PC-9 (cell line): ENCODE measurements at regions of chr7 and their contacts with region 1.

Region 1: GRCh38 chr7:99210264-99210970 is 2.5 kb upstream of the KPNA7 start:
- DNase-seq: peak; percentile 52 to 99
- H3K4me3 ChIP-seq: peak overlapping the region; percentile 20; the same call in 1 of the 2 replicates
- H3K27ac ChIP-seq: peak overlapping the region; percentile 100
- H3K4me1 ChIP-seq: peaks cover 70% of the 10 kb centered on the region
- H3K27me3 ChIP-seq: no peaks in the 10 kb centered on the region
- CTCF ChIP-seq: no peak

Region 2: GRCh38 chr7:99040104-99040958 is 170.1 kb before region 1 on chr7:
- CTCF ChIA-PET with region 1: no interaction called
- POLR2A ChIA-PET with region 1: no interaction called
- intact Hi-C with region 1: loop called (anchors 5 kb)
- DNase-seq: peak; percentile 64 to 75
- H3K4me3 ChIP-seq: no peak overlapping the region
- H3K27ac ChIP-seq: peak overlapping the region; percentile 20
- H3K4me1 ChIP-seq: no peaks in the 10 kb centered on the region
- H3K27me3 ChIP-seq: no peaks in the 10 kb centered on the region
- CTCF ChIP-seq: peak; percentile 81

Region 3: DNA sequence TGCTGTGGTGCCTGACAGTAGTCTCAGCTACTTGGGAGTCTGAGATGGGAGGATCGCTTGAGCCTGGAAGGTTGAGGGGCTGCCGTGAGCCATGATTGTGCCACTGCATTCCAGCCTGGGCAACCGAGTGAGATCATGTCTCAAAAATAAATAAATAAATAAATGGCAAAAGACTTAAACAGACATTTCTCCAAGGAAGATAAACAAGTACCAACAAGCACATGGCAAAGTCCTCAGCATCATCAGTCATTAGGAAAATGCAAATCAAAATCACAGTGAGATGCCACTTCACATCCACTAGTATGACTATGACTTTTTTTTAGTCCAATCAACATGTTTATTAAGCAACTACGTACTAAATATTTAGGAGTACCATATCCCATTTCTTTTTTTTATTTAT is 18.8 kb after region 1 on chr7:
- CTCF ChIA-PET with region 1: no interaction called
- POLR2A ChIA-PET with region 1: interaction called, 18 read pairs
- intact Hi-C with region 1: loop called (anchors 1 kb)
- DNase-seq: no peak
- H3K4me3 ChIP-seq: no peak overlapping the region
- H3K27ac ChIP-seq: no peak overlapping the region
- H3K4me1 ChIP-seq: peaks cover 25% of the 10 kb centered on the region
- H3K27me3 ChIP-seq: no peaks in the 10 kb centered on the region
- CTCF ChIP-seq: no peak

Region 4: GRCh38 chr7:99290980-99291607 is 80.7 kb after region 1 on chr7:
- CTCF ChIA-PET with region 1: interaction called, 10 read pairs
- POLR2A ChIA-PET with region 1: no interaction called
- intact Hi-C with region 1: no loop called
- DNase-seq: no peak
- H3K4me3 ChIP-seq: no peak overlapping the region
- H3K27ac ChIP-seq: no peak overlapping the region
- H3K4me1 ChIP-seq: no peaks in the 10 kb centered on the region
- H3K27me3 ChIP-seq: no peaks in the 10 kb centered on the region
- CTCF ChIP-seq: no peak